ENCODE measurements at regions of chr3 and their contacts with region 1.

Region 1: DNA sequence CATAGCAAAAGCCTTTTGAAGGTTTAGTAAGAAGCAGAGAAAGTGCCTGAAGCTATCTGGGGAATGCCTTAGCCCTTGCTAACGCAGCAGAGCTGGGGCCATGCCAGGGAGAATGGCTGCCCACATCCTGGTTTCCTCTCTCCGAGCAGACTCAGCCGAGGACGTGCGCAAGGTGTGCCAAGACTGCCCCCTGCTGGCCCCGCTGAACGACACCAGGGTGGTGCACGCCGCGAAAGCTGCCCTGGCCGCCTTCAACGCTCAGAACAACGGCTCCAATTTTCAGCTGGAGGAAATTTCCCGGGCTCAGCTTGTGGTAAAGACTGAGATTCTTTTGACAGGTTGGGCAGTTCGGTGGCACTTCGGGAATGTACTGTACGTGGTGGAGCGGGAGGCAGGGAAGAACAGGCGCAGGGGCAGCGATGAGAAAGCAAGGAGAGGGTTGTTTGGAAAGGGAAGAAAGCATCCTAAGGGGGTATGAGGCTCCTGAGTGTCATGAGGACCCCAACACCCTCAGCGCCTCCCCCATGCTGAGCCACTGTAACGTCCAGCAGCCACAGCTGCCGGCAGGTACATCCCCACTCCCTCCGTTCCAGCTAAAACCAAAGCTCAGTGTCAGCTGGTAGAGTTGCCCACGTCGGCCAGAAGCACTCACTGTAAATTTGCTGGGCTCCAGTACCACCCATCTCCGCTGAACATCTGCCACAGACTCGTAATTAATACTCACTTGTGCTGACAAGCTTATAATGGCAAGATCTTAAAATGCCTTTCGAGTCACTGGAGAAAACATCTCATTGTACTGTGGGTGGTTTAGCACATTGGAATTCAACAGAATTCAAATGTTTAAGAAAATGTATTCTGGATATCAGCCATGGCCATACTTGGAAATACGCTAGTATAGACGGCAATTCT is 4.4 kb downstream of the AHSG start:
- DNase-seq: peak; percentile 74 to 91 (median 88)
- H3K4me3 ChIP-seq: no peak overlapping the region
- H3K27ac ChIP-seq: no peak overlapping the region
- H3K4me1 ChIP-seq: no peaks in the 10 kb centered on the region
- H3K27me3 ChIP-seq: no peaks in the 10 kb centered on the region
- CTCF ChIP-seq: peak; percentile 72 to 86 (median 80)
- POLR2A ChIP-seq: no peak

Region 2: GRCh38 chr3:186551387-186551786 is 65.9 kb before region 1 on chr3:
- intact Hi-C with region 1: no loop called
- DNase-seq: no peak
- H3K4me3 ChIP-seq: no peak overlapping the region
- H3K27ac ChIP-seq: no peak overlapping the region
- H3K4me1 ChIP-seq: no peaks in the 10 kb centered on the region
- H3K27me3 ChIP-seq: no peaks in the 10 kb centered on the region
- CTCF ChIP-seq: no peak
- POLR2A ChIP-seq: no peak

Region 3: DNA sequence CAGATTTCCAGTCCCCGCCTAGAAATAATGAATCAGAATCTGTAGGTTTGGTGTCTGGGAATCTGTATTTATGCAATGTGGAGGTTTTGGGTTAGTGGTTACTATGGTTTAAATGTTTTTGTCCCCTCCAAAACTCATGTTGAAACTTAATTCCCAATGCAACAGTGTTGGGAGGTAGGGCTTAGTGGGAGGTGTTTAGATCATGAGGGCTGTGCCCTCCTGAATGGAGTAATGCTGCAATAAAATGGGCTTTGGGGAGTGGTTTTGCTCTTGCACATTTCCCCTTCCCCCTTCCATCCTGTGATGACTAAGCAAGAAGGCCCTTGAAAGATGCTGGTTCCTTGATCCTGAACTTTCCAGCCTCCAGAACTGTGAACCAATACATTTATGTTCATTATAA is 198.1 kb after region 1 on chr3:
- intact Hi-C with region 1: loop called (anchors 5 to 10 kb)
- DNase-seq: no peak
- H3K4me3 ChIP-seq: no peak overlapping the region
- H3K27ac ChIP-seq: no peak overlapping the region
- H3K4me1 ChIP-seq: no peaks in the 10 kb centered on the region
- H3K27me3 ChIP-seq: no peaks in the 10 kb centered on the region
- CTCF ChIP-seq: no peak
- POLR2A ChIP-seq: no peak

Region 4: DNA sequence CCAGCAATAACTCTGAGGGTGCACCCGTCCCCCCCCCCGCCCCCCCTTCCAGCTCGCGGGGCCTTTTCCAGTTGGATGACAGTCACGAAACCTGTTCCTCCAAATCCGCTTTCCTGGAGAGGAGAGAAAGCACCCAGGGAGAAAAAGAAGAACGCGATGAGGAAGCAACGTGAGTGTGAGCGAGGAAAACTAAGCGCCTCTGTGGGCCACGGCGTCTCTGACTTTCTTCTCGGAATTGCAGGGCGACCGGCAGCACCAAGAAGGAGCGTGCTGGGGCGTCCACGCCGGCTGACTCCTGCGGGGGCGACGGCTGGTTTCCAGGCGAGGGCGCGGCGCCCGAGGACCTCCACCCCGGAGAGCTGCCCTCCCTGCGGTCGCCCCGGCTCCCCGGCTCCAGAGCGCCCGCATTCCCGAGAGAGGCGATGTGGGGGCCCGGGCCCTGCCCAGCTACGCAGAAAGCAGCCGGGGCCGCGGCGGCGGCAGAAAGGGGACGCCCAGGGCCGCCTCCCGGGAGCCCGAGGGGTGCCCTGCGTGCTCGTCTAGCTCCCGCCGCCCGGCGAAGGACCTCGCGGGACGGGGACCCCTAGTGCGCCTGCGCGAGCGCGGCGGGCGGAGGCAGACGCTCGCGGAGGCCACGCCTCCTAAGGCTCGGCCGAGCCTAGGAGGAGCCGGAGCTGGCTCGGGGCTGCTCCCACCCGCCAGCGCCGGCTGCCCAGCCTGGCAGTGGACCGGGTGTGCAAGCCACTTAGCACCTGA is 209.9 kb after region 1 on chr3:
- intact Hi-C with region 1: loop called in 1 of 2 experiments (anchors 10 kb)
- DNase-seq: peak; percentile 57 to 85 (median 75)
- H3K4me3 ChIP-seq: peak overlapping the region in 2 of 4 donors; percentile 70 to 73
- H3K27ac ChIP-seq: peak overlapping the region in 1 of 5 donors; percentile 17
- H3K4me1 ChIP-seq: peaks cover 0 to 5% of the 10 kb centered on the region in 2 donors
- H3K27me3 ChIP-seq: peaks cover 29% of the 10 kb centered on the region
- CTCF ChIP-seq: no peak
- POLR2A ChIP-seq: peak in 1 of 2 donors; percentile 28